ENCODE measurements at regions of chr18 and their contacts with region 1.

Region 1: DNA sequence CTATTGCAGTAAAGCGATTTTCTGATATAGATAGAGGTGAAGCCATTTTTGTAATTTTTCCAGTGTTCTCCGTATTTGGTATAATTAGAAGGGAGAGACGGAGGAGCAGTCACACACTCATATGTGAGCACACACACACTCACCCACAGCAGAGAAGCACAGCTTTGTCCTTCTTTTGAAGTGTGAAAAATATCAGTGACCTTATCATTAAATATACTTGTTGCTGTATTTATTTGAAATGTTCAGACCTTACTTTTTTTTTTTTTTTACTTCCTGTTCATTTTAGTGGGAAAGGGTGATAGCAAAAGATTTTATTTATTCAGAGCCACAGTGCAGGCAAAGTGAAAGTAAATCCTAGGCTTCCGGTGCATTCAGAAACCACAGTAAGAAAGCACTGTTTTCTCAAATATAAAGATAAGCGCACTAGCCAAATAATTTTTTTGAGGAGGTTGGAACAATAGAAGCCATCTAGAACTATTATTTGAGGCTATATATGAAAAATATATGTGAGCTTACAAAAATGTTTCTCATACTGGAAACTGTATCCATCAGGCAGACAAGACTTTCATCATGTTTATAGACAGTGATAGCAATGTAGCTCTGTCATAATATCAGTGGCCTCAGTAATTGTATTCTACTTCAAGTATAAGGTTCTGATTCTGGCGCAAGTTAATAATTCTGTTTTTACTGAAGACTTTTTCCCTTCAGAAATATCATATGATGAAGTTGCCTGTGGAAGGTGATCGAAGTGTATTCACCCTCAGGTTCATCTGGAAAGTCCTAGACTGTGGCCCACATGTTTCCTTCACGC is 37.2 kb downstream of the TSHZ1 start:
- DNase-seq: peak in 7 of 9 donors; percentile 43 to 66 (median 58)
- ATAC-seq: peak; percentile 62
- H3K4me3 ChIP-seq: peak overlapping the region; percentile 43
- H3K4me3 Mint-ChIP-seq: peak overlapping the region; percentile 86 to 93 (median 90)
- H3K27ac ChIP-seq: peak overlapping the region; percentile 82
- H3K27ac Mint-ChIP-seq: peak overlapping the region; percentile 91 to 99 (median 96)
- H3K4me1 ChIP-seq: peaks cover 31 to 43% of the 10 kb centered on the region in 2 donors
- H3K4me1 Mint-ChIP-seq: peaks cover 44 to 94% (median 87%) of the 10 kb centered on the region in 7 donors
- H3K27me3 ChIP-seq: no peaks in the 10 kb centered on the region
- H3K27me3 Mint-ChIP-seq: no peaks in the 10 kb centered on the region

Region 2: GRCh38 chr18:74597662-74598349 is 650.0 kb before region 1 on chr18 and contains the start of gene ZNF407:
- CTCF ChIA-PET with region 1: no interaction called
- POLR2A ChIA-PET with region 1: interaction called, 4 read pairs
- intact Hi-C with region 1: loop called in 1 of 2 experiments (anchors 2 kb)
- DNase-seq: peak; percentile 77 to 94 (median 90)
- ATAC-seq: peak; percentile 84
- H3K4me3 ChIP-seq: peak within 1 kb of the TSS; percentile 100
- H3K4me3 Mint-ChIP-seq: peak within 1 kb of the TSS; percentile 89 to 96 (median 95)
- H3K27ac ChIP-seq: peak within 1 kb of the TSS; percentile 88
- H3K27ac Mint-ChIP-seq: peak within 1 kb of the TSS; percentile 95 to 99 (median 98)
- H3K4me1 ChIP-seq: peaks cover 26 to 27% of the 10 kb centered on the region in 2 donors
- H3K4me1 Mint-ChIP-seq: peaks cover 33 to 74% (median 61%) of the 10 kb centered on the region in 7 donors
- H3K27me3 ChIP-seq: no peaks in the 10 kb centered on the region
- H3K27me3 Mint-ChIP-seq: no peaks in the 10 kb centered on the region
- total RNA-seq, gene ZNF407: 23.1 to 31.3 (median 29.7) TPM

Region 3: DNA sequence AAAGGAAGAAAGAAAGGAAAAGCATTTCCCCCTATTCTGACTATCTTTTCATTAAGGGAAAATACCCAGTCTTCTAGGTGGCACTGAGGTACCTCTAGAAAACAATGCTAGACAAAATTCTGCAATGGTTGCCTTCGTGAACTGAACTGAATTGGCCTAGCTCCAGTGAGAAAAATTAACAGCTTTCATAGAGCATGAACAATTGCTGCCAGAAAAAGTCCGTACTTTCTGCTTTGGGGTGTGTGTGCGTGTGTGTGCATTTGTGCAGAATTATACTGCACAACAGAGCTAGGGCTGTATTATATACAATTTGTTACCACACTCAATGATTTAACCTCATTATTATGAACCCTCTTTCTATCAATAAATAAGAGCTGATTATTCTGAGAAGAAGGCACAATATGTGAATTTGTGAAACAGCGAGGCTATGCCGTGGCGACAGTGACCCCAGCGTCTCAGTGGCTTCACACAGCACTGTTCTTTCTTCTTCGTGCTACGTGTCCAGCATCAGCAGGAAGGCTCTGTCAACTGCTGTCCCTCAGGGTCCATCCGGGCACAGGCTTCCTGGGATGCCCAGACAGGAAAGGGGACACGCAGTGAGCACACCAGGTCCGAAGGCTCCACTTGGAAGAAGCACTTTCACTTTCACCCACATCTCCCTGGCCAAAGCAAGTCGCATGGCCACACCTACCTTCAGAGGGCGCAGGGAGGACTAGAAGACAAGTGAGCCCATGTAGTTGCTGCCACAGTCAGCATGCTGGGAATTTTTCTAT is 86.4 kb before region 1 on chr18:
- CTCF ChIA-PET with region 1: no interaction called
- POLR2A ChIA-PET with region 1: no interaction called
- intact Hi-C with region 1: loop called in 1 of 2 experiments (anchors 1 kb)
- DNase-seq: peak in 7 of 9 donors; percentile 26 to 51 (median 37)
- ATAC-seq: peak; percentile 77
- H3K4me3 ChIP-seq: peak overlapping the region; percentile 77
- H3K4me3 Mint-ChIP-seq: peak overlapping the region; percentile 80 to 95 (median 91)
- H3K27ac ChIP-seq: peak overlapping the region; percentile 69
- H3K27ac Mint-ChIP-seq: peak overlapping the region in 8 of 9 donors; percentile 79 to 93 (median 88)
- H3K4me1 ChIP-seq: no peaks in the 10 kb centered on the region
- H3K4me1 Mint-ChIP-seq: peaks cover 7 to 28% (median 12%) of the 10 kb centered on the region in 7 donors
- H3K27me3 ChIP-seq: no peaks in the 10 kb centered on the region
- H3K27me3 Mint-ChIP-seq: peaks cover 0 to 4% (median 0%) of the 10 kb centered on the region in 5 donors

Measured in naive thymus-derived CD4-positive, alpha-beta T cell (primary cell).